Transverse colon (tissue), 4 donors: ENCODE measurements at regions of chr6 and their contacts with region 1.

Region 1: GRCh38 chr6:134097114-134097707 is 44.8 kb upstream of the SLC2A12 start:
- DNase-seq: peak; percentile 58
- H3K4me3 ChIP-seq: no peak overlapping the region
- H3K27ac ChIP-seq: no peak overlapping the region
- H3K4me1 ChIP-seq: no peaks in the 10 kb centered on the region
- H3K27me3 ChIP-seq: no peaks in the 10 kb centered on the region
- CTCF ChIP-seq: peak; percentile 54 to 74 (median 64)
- EP300 ChIP-seq: no peak
- POLR2A ChIP-seq: no peak

Region 2: GRCh38 chr6:132962936-132963868 is 1134.0 kb before region 1 on chr6:
- in situ Hi-C with region 1: loop called in 1 of 4 experiments (anchors 25 kb)
- intact Hi-C with region 1: no loop called
- DNase-seq: peak; percentile 50
- H3K4me3 ChIP-seq: no peak overlapping the region
- H3K27ac ChIP-seq: no peak overlapping the region
- H3K4me1 ChIP-seq: no peaks in the 10 kb centered on the region
- H3K27me3 ChIP-seq: no peaks in the 10 kb centered on the region
- CTCF ChIP-seq: peak; percentile 38 to 64 (median 50)
- EP300 ChIP-seq: no peak
- POLR2A ChIP-seq: no peak

Region 3: DNA sequence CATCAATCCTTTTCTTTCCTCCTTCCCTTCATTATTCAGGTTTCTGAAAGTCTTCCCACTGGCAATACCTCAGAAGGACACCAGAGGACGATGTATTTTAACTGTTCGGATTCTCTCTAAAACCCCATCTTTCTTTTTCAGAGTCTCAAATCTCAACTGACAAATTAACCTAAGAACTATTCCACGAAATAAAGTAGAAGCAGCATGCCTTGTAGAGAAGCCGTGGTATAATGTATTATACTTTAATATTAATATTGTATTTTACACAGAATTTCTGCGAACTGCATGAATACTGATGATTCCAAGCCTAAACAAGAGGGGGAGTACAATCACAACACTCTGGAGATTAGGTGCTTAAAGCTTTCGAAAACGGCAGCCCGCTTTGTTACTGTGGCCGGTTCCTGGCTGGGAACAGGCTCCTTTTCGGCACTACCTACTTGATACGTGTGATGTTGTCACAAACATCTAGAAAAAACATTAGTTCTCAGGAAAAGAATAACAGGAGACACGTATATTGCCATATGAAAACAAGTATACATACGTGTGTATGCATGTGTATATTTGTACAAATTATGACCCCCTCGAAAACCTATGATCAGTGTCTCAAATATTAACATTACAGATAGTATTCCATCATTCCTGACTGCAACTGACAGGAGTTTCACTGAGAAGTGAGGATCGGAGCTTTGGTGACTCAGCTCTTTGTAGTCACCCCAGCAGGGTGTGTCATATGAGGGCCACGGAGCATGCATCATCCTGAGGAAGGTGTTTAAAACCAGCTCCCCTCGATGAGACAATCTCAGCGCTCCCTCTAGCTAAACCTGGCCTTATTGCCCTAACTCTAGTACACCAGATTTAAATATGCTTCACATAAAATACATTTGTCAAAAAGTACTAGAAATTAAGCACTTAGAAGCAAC is 528.0 kb before region 1 on chr6:
- in situ Hi-C with region 1: loop called in 3 of 4 experiments (anchors 25 kb)
- intact Hi-C with region 1: no loop called
- DNase-seq: peak; percentile 14
- H3K4me3 ChIP-seq: peak overlapping the region in 3 of 4 donors; percentile 1 to 37 (median 8)
- H3K27ac ChIP-seq: peak overlapping the region in 3 of 4 donors; percentile 38 to 61 (median 46)
- H3K4me1 ChIP-seq: peaks cover 0 to 6% (median 0%) of the 10 kb centered on the region in 4 donors
- H3K27me3 ChIP-seq: peaks cover 5% of the 10 kb centered on the region
- CTCF ChIP-seq: peak; percentile 69 to 92 (median 81)
- EP300 ChIP-seq: no peak
- POLR2A ChIP-seq: no peak

Region 4: DNA sequence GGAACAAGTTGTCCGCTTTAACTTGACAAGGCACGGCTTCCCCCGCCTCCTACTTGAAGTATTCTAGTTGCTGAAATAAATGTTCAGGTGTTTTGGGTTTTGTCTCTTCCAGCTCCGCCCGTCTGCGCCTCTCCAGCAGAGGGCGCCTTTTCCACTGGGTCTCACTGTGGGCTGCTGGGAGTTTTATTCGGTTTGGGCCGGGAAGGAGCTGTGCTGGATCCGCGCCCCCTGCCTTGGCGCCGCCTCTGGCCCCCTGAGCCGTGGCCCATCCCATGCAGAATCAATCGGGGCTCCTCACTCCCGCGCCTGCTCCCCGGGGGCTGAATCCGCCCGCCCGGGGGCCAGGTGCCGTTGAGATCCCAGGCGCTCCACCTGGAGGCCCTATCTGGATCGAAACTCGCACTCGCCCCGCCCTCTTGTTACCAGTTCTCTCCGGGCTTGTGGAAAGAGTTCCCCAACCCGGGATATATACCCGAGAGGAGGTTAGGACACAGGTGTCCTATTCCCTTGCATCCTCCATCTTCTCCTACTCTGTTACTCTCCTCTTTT is 259.3 kb before region 1 on chr6:
- in situ Hi-C with region 1: loop called in 1 of 4 experiments (anchors 10 kb)
- intact Hi-C with region 1: no loop called
- DNase-seq: peak; percentile 68
- H3K4me3 ChIP-seq: peak overlapping the region; percentile 17 to 50 (median 42)
- H3K27ac ChIP-seq: no peak overlapping the region
- H3K4me1 ChIP-seq: no peaks in the 10 kb centered on the region
- H3K27me3 ChIP-seq: no peaks in the 10 kb centered on the region
- CTCF ChIP-seq: peak; percentile 54 to 79 (median 73)
- EP300 ChIP-seq: no peak
- POLR2A ChIP-seq: no peak

Region 5: DNA sequence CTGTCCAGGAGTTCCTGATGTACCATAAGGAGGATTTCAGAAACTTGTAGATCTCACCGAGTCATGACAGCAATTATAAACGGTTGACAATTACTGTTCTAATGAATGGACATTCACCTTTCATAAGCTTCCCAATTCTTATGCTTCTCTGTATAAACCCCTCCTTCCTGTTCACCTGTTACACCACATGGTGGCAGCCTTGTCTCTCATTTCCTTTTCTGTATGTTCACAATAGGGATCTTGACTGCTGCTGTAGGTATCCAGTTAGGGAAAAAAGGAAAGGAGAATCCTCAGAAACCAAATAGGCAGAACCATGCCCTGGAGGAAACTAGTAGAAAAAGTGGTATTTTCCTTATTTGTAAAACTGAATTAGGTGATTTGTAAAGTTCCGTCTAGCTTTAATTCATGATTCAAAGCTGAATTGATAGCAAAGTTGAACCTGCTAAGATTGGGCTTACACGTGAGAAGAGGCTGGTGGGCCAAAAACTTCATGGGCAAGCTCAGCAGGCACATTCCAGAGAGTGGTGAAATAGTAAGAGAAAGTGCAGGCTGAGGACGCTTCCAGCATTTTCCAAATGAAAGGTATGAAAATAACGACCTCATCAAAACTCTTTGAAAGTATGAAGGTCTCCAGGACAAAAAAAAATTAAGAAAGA is 173.1 kb before region 1 on chr6:
- in situ Hi-C with region 1: loop called (anchors 5 to 10 kb)
- intact Hi-C with region 1: loop called (anchors 5 kb)
- DNase-seq: peak; percentile 67
- H3K4me3 ChIP-seq: no peak overlapping the region
- H3K27ac ChIP-seq: no peak overlapping the region
- H3K4me1 ChIP-seq: peaks cover 0 to 4% (median 0%) of the 10 kb centered on the region in 4 donors
- H3K27me3 ChIP-seq: peaks cover 9% of the 10 kb centered on the region
- CTCF ChIP-seq: peak; percentile 81 to 87 (median 81)
- EP300 ChIP-seq: no peak
- POLR2A ChIP-seq: no peak

Region 6: DNA sequence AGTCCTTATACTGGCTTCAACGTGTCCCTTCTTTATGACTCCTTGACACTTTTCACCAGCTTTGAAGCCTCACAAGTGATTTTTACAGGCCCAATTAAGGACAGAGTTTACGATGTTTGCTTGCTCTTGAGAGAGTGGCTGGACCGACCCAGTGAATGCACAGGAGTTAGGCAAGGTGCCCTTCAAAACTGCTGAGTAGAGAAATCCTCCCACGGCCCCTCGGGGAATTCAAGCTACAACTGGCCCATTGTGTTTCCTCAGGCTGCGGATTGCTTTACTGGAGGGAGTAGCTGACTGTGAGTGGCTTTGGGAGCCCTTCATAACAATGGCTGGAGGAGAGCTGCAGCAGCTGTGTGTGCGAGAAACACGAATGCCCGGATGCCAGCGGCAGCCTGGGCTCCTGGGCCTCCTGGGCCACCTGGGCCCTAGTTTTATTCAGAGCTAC is 170.7 kb after region 1 on chr6:
- in situ Hi-C with region 1: no loop called
- intact Hi-C with region 1: no loop called
- DNase-seq: peak; percentile 39
- H3K4me3 ChIP-seq: no peak overlapping the region
- H3K27ac ChIP-seq: no peak overlapping the region
- H3K4me1 ChIP-seq: peaks cover 0 to 4% (median 0%) of the 10 kb centered on the region in 4 donors
- H3K27me3 ChIP-seq: no peaks in the 10 kb centered on the region
- CTCF ChIP-seq: no peak
- EP300 ChIP-seq: no peak
- POLR2A ChIP-seq: no peak